ENCODE measurements at regions of chr19 and their contacts with region 1.

Region 1: DNA sequence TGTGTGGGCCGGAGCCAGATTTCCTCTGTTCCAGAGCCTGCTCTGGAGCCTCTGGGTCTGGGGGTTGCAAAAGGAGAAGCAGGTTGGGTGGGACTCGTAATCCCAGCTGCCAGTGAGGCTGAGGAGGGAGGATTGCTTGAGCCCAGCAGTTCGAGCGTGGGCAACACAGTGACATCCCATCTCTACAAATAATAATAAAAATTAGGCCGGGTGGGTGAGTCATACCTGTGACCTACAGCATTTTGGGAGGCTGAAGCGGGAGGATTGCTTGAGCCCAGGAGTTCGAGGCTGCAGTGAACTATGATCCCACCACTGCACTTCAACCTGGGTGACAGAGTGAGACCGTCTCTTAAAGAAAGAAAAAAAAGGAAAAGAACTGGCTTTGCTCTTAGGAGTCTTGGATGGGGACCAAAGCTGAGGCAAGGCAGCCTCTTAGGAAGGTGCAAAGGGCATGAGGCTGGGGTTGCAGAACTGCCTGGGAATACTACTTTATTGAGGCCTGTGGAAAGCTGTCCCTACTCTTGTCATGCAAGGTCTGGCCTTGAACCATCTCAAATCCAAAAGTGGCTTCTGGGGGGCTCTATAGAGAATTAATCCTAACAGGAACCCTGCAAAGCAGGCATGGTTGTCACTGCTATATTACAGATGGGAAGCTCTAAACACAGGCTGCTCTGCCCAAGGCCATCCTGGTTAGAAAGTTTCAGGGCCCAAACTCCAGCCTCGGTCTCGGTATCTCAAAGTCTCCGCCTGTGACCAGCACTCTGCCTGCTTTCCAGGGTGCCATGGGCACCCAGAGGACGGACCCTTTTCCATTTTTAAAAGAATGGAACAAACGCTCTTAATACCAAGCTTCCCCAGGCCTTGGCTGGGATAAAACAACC is 880 bp upstream of the C19orf12 start:
- DNase-seq: no peak
- ATAC-seq: peak; percentile 36

Region 2: DNA sequence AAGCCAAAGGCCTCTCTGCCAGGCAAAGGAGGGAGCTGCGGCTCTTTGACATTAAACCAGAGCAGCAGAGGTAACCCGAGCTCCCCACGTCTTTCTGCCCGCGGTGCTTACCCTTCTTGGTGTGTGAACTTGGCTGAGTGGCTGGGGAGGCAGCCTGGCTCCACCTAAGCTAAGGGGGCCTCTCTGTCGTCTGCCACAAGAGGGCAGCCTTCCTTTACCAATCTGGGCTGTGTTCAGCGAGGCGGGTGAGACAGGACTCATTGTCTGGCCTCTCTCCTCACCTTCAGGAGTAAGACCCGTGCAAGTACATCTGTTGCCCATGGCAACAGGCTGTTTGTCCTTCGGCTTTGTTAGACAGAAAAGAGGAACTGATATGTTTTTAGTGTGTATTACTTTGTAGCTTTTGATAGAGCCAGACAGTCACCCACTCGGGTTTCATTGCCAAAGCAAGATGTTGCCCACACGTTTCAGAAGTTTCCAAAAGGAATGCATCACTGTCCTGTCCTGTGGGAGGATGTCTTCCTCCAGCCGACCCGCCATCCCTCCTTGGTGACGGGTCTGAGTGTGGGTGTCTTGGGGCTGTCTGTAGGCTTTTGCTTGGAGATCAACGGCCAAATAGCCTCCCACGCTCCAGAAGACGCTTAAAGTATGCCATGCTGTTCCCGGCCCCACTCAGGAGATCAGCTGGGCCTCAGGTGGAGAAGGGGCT is 105.2 kb before region 1 on chr19:
- intact Hi-C with region 1: loop called (anchors 1 kb)
- DNase-seq: peak; percentile 91
- ATAC-seq: peak; percentile 76

Region 3: DNA sequence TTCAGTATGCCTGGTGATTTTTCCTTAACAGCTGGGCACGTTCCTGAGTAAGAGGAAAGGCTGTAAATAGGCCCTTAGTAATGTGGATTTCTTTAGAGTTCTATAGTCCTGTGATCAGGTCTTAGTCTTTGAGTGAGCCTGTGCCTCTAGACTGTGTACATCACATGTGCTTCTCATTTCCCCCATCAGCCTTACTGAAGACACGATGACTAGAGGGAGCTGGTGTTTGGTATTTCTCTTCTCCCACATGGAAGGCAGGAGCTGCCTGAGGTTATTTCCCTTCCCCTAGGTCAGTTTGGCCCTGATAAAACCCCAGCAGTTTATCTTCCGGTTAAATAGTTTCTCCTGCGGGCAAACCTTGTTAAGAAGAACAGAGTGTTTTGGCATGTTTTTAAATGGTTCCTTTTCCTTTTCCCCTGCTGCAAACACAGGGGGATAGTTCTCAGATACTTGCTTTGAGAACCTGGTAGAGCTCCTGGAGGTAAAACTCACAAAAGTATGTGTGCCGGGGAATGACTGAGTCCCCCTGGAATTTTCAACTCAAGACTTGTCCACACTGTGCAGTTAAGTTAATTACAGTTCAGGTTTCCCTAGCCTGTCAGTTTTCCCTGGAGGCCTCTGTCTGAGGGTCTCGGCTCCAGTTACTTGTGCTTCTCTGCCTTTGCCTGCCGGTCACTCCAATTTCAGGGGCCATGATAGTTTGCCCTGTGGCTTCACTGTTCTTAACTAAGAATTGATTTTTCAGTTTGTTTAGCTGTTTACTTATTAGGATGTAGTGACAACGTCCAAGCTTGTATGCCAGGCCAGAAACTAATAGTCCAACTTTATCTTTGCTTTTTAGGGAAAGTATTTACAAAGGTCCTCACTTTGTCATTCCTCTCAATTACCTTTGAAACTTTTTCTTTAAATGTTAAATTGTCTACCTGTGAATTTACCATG is 320.5 kb after region 1 on chr19:
- intact Hi-C with region 1: no loop called
- DNase-seq: no peak
- ATAC-seq: no peak

Measured in sciatic nerve (tissue), 2 donors.